ENCODE measurements at regions of chr4 and their contacts with region 1.

Region 1: GRCh38 chr4:147518846-147519767 is 38.2 kb downstream of the EDNRA start:
- DNase-seq: peak; percentile 73
- H3K4me3 ChIP-seq: no peak overlapping the region
- H3K27ac ChIP-seq: no peak overlapping the region
- H3K4me1 ChIP-seq: no peaks in the 10 kb centered on the region
- H3K27me3 ChIP-seq: peaks cover 4 to 8% of the 10 kb centered on the region in 2 experiments
- CTCF ChIP-seq: peak; percentile 77 to 85
- POLR2A ChIP-seq: no peak

Region 2: DNA sequence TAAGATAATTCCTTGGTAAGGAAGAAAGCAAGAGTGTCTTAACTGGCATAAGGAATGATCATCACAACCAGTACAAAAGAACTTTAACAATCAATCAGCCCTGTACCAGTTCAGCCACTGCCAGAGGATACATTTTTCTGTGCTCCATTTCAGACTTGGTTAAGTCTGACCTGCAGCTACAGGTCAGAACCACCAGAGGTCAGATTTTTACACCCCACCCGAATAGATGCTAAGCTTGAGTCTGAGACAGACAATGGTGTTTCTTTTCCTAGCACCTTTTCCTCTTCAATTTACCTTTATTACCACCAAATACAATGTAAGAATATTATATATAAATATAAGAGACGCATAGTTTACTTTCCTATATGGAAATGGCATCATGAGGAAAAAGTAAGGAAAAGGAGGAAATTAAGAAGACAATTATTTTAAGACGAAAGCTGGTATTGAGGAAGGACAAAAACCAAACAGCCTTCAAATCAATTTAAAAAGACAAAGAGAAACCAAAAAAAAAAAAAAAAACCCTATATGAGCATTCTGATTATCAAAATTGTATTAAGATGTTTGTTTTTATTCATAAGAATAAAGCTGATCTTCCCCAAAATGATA is 358.1 kb before region 1 on chr4:
- CTCF ChIA-PET with region 1: interaction called, 42 read pairs
- POLR2A ChIA-PET with region 1: no interaction called
- dilution Hi-C with region 1: no loop called
- intact Hi-C with region 1: loop called (anchors 2 kb)
- DNase-seq: peak; percentile 53
- H3K4me3 ChIP-seq: no peak overlapping the region
- H3K27ac ChIP-seq: no peak overlapping the region
- H3K4me1 ChIP-seq: peaks cover 4% of the 10 kb centered on the region
- H3K27me3 ChIP-seq: peaks cover 0 to 14% of the 10 kb centered on the region in 2 experiments
- CTCF ChIP-seq: peak; percentile 65 to 71
- POLR2A ChIP-seq: no peak

Region 3: DNA sequence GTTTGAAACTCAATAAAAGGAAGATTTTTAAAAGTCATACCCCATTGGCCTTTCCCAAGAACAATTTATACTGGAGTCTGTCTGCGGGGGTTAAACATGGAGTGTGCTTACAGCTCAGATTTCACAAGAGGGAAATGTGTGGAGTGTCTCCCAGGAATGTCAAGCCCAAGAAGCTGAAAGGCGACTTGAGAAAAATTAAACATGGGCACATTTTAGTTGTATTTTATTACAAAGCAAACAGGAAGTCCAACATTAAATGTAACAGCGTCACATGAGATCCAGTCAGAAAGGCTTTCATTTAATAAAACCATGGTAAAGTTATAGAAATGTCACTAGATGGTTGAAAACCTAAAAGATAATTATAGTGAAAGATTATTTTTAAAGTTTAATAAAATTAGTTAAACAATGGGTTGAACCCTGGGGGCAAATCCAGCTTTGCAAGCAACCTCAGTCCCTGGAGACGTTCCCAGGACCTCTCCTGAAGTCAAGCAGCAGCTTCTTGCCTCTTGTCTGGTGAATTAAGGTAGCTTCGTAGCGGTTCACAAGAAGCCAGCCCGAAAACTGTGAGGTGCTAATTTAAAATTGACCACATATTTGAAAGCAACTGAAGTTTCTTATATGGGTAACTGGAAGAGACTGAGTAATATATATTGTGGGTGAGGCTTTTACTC is 206.6 kb before region 1 on chr4:
- CTCF ChIA-PET with region 1: no interaction called
- POLR2A ChIA-PET with region 1: no interaction called
- dilution Hi-C with region 1: no loop called
- intact Hi-C with region 1: no loop called
- DNase-seq: no peak
- H3K4me3 ChIP-seq: no peak overlapping the region
- H3K27ac ChIP-seq: no peak overlapping the region
- H3K4me1 ChIP-seq: no peaks in the 10 kb centered on the region
- H3K27me3 ChIP-seq: peaks cover 0 to 2% of the 10 kb centered on the region in 2 experiments
- CTCF ChIP-seq: no peak
- POLR2A ChIP-seq: no peak

Region 4: DNA sequence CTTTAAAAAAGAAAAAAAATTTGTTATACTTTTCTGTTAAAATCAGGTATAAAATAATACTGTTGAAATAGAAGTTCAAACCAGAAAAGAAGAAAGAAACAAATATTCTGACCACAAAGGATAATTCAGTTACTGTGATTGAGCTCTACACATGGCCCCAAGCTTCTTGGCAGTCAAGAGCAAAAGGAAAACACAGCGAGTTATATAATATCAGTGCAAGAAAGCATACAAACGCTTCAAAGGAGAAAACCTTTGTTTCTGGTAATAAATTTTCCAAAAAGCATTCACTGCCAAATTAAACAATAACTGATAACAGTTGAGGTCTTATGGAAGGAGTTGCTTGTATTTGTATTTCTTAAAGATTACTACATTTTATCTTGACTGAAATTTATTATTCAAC is 78.7 kb before region 1 on chr4:
- CTCF ChIA-PET with region 1: no interaction called
- POLR2A ChIA-PET with region 1: no interaction called
- dilution Hi-C with region 1: no loop called
- intact Hi-C with region 1: no loop called
- DNase-seq: no peak
- H3K4me3 ChIP-seq: no peak overlapping the region
- H3K27ac ChIP-seq: no peak overlapping the region
- H3K4me1 ChIP-seq: no peaks in the 10 kb centered on the region
- H3K27me3 ChIP-seq: no peaks in the 10 kb centered on the region
- CTCF ChIP-seq: no peak
- POLR2A ChIP-seq: no peak

Region 5: DNA sequence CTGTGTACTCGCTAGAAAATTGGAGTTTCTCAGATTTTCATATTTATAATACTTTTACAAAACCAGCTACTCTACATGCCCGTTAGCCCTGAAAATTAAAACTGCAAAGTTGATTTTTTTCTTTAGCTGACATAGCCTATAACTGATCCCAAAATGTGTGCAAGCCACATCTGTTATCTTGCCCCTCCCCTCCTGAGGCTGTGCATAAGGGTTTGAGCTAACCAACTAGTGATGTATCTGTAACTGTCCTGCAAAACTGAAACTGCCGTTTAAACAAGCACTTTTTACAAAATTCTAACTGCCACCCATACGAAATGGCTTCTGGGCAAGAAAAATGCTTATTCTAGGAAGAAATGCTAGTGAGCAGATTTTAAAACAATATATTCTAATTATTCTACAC is 20.9 kb after region 1 on chr4:
- CTCF ChIA-PET with region 1: interaction called, 17 read pairs
- POLR2A ChIA-PET with region 1: no interaction called
- dilution Hi-C with region 1: no loop called
- intact Hi-C with region 1: no loop called
- DNase-seq: no peak
- H3K4me3 ChIP-seq: no peak overlapping the region
- H3K27ac ChIP-seq: no peak overlapping the region
- H3K4me1 ChIP-seq: no peaks in the 10 kb centered on the region
- H3K27me3 ChIP-seq: peaks cover 7 to 16% of the 10 kb centered on the region in 2 experiments
- CTCF ChIP-seq: no peak
- POLR2A ChIP-seq: no peak

Region 6: GRCh38 chr4:147560637-147561036 is 41.5 kb after region 1 on chr4:
- CTCF ChIA-PET with region 1: interaction called, 18 read pairs
- POLR2A ChIA-PET with region 1: no interaction called
- dilution Hi-C with region 1: no loop called
- intact Hi-C with region 1: no loop called
- DNase-seq: no peak
- H3K4me3 ChIP-seq: no peak overlapping the region
- H3K27ac ChIP-seq: no peak overlapping the region
- H3K4me1 ChIP-seq: no peaks in the 10 kb centered on the region
- H3K27me3 ChIP-seq: peaks cover 0 to 1% of the 10 kb centered on the region in 2 experiments
- CTCF ChIP-seq: no peak
- POLR2A ChIP-seq: no peak

Region 7: GRCh38 chr4:147578051-147578476 is 59.0 kb after region 1 on chr4:
- CTCF ChIA-PET with region 1: interaction called, 28 read pairs
- POLR2A ChIA-PET with region 1: no interaction called
- dilution Hi-C with region 1: no loop called
- intact Hi-C with region 1: no loop called
- DNase-seq: peak; percentile 98
- H3K4me3 ChIP-seq: no peak overlapping the region
- H3K27ac ChIP-seq: peak overlapping the region; percentile 74
- H3K4me1 ChIP-seq: peaks cover 17% of the 10 kb centered on the region
- H3K27me3 ChIP-seq: no peaks in the 10 kb centered on the region
- CTCF ChIP-seq: no peak
- POLR2A ChIP-seq: peak; percentile 53

Region 8: DNA sequence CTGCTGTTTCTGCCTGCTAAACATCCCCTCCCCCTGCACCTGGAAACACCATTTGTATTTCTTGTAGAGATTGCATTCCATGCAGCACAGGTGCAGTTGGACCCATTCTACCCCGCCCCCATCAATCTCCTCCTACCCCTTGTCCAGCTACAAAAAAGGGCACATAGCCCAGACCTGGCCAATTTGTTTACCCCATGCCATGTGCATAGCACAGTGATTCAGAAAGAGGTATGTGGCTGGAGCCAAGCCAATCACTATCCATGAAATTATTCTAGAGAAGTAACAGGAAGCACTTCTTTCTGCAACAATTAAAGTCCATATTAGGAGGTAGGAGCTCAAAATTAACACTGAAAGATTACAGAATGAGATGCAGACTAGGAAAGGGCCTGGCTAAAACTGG is 77.9 kb after region 1 on chr4:
- CTCF ChIA-PET with region 1: interaction called, 31 read pairs
- POLR2A ChIA-PET with region 1: no interaction called
- dilution Hi-C with region 1: no loop called
- intact Hi-C with region 1: no loop called
- DNase-seq: peak; percentile 76
- H3K4me3 ChIP-seq: no peak overlapping the region
- H3K27ac ChIP-seq: no peak overlapping the region
- H3K4me1 ChIP-seq: peaks cover 4% of the 10 kb centered on the region
- H3K27me3 ChIP-seq: peaks cover 0 to 3% of the 10 kb centered on the region in 2 experiments
- CTCF ChIP-seq: no peak
- POLR2A ChIP-seq: no peak

Region 9: GRCh38 chr4:149512501-149512900 is 1993.4 kb after region 1 on chr4:
- CTCF ChIA-PET with region 1: no interaction called
- POLR2A ChIA-PET with region 1: no interaction called
- dilution Hi-C with region 1: no loop called
- intact Hi-C with region 1: no loop called
- DNase-seq: no peak
- H3K4me3 ChIP-seq: no peak overlapping the region
- H3K27ac ChIP-seq: no peak overlapping the region
- H3K4me1 ChIP-seq: no peaks in the 10 kb centered on the region
- H3K27me3 ChIP-seq: no peaks in the 10 kb centered on the region
- CTCF ChIP-seq: no peak
- POLR2A ChIP-seq: no peak

Measured in endothelial cell of umbilical vein (primary cell).